ENCODE measurements at regions of chr3 and their contacts with region 1.

Region 1: DNA sequence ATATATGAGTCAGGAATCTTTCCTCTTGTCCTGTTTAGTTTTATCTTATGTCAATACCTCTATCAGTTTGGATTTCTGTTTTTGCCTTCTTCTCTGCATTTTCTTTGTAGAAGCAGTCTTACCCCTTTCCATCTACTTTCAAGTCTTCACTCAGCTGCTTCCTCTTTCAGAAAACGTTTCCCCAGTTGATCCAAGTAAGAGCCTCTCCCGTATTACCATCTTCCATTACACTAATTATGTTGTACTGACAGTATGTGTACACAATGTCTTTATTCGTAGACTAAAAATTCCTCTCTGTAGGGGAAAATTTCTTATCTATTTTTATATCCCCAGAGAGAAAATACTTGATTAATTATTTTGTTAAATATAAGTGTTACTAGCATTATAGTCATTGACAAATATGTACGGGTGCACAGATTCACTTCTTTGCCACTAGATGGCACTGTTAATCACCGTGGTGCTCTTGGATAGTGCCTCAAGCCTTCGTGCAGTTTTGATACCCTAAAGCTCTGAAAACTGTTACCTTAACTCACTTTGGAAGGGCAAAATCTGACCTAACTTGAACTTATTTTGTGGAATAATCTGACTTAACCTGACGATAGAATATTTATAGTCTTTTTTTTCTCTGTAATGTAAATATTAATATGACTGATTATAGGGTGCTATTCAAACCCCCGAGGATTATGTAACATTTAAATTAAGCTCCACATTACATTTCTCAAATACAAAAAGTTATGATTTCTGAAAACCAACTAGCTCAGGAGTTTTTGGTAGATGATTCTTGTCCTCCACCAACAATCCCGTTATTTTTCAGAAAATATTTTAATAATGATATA is 74.2 kb upstream of the POU1F1 start:
- DNase-seq: peak; percentile 20
- ATAC-seq: peak; percentile 85
- H3K4me3 Mint-ChIP-seq: no peak overlapping the region
- H3K27ac Mint-ChIP-seq: no peak overlapping the region
- H3K4me1 Mint-ChIP-seq: no peaks in the 10 kb centered on the region
- H3K27me3 Mint-ChIP-seq: peaks cover 5% of the 10 kb centered on the region

Region 2: DNA sequence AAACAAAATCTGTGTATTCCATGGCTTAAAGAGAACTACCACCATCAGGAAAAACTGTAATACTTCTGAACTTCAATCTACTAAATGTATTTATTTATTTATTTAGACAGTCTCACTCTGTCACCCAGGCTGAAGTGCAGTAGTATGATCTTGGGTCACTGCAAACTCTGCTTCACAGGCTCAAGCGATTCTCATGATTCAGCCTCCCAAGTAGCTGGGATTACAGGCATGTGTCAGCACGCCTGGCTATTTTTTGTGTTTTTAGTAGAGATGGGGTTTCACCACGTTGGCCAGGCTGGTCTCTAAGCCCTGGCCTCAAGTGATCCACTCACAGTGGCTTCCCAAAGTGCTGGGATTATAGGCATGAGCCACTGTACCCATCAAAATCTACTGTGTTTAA is 128.1 kb after region 1 on chr3:
- CTCF ChIA-PET with region 1: no interaction called
- POLR2A ChIA-PET with region 1: no interaction called
- intact Hi-C with region 1: no loop called
- DNase-seq: no peak
- ATAC-seq: no peak
- H3K4me3 Mint-ChIP-seq: no peak overlapping the region
- H3K27ac Mint-ChIP-seq: no peak overlapping the region
- H3K4me1 Mint-ChIP-seq: no peaks in the 10 kb centered on the region
- H3K27me3 Mint-ChIP-seq: no peaks in the 10 kb centered on the region

Region 3: DNA sequence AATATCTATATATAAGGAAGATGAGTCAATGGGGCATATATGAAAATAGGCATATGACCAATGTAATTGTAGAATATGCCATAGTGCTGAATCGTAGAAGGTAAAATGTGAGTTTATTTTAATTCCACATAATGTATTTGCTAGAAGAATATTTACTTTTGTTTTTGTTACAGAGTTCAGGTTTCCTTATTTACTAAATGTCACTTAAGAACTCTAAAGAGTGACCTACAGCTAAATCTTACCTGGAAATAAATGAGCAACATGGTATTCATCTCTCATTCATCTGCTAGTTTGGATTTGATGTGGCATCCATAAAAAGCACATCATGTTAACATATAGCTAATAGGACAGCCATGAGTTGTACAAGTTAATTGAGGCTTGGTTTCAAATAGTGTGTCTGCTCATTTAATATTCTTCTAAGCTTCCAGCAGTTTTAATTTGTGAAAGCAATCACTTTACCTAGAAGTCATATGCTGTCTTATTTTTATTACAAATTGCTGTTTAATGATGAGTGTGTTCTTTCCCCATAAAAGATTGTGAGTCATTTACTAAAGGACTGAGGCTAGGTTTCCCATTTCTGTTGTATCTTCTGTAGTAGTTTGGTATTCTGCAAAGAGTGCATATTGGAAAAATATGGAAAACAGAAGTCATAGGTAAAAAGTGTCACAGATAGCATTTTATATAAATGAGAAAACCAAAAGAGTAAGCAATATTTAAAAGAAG is 147.9 kb after region 1 on chr3:
- CTCF ChIA-PET with region 1: interaction called, 14 read pairs
- POLR2A ChIA-PET with region 1: no interaction called
- intact Hi-C with region 1: no loop called
- DNase-seq: no peak
- ATAC-seq: no peak
- H3K4me3 Mint-ChIP-seq: no peak overlapping the region
- H3K27ac Mint-ChIP-seq: no peak overlapping the region
- H3K4me1 Mint-ChIP-seq: no peaks in the 10 kb centered on the region
- H3K27me3 Mint-ChIP-seq: no peaks in the 10 kb centered on the region

Region 4: DNA sequence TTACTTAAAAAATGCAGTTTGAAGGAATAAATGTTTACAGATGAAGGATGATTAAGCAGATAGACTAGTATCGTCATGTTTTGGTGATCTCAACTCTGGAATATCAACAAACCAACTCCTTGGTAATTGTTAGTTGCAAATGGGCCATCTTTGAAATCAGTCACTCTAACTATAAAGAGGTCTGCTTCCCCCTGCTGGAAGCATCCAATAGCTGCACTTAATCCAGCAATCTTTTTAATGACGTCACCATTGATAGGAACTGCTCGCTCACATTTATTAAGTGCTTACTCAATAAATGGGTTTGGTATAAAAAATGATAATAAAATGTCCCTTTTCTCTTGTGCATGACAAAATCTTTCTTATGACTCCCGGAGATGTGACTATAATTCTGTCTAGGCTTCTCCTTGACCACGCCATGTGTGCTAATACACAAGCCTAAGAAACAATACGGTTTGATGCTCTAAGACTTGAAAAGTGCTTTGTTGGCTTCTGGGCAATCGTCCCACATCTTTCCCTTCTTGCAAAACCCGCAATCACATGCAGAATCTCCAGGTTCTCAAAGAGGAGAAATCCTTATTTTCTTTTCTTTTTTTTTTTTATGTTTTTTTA is 153.4 kb after region 1 on chr3:
- CTCF ChIA-PET with region 1: interaction called, 14 read pairs
- POLR2A ChIA-PET with region 1: no interaction called
- intact Hi-C with region 1: loop called (anchors 1 to 2 kb)
- DNase-seq: peak; percentile 16
- ATAC-seq: no peak
- H3K4me3 Mint-ChIP-seq: no peak overlapping the region
- H3K27ac Mint-ChIP-seq: no peak overlapping the region
- H3K4me1 Mint-ChIP-seq: no peaks in the 10 kb centered on the region
- H3K27me3 Mint-ChIP-seq: no peaks in the 10 kb centered on the region

Region 5: DNA sequence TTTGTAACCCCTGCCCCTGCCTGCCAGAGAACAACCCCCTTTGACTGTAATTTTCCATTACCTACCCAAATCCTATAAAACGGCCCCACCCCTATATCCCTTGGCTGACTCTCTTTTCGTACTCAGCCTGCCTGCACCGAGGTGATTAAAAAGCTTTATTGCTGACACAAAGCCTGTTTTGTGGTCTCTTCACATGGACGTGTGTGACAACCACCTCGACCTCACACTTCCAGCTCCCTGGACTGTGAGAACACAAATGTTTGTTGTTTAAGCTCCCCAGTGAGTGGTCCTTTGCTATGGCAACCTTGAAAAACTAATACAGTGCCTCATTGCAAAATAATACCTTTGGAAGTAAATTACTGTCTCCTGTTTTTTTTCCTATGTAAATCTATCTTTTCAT is 225.0 kb after region 1 on chr3:
- CTCF ChIA-PET with region 1: no interaction called
- POLR2A ChIA-PET with region 1: no interaction called
- intact Hi-C with region 1: no loop called
- DNase-seq: no peak
- ATAC-seq: no peak
- H3K4me3 Mint-ChIP-seq: no peak overlapping the region
- H3K27ac Mint-ChIP-seq: no peak overlapping the region
- H3K4me1 Mint-ChIP-seq: no peaks in the 10 kb centered on the region
- H3K27me3 Mint-ChIP-seq: no peaks in the 10 kb centered on the region

Region 6: DNA sequence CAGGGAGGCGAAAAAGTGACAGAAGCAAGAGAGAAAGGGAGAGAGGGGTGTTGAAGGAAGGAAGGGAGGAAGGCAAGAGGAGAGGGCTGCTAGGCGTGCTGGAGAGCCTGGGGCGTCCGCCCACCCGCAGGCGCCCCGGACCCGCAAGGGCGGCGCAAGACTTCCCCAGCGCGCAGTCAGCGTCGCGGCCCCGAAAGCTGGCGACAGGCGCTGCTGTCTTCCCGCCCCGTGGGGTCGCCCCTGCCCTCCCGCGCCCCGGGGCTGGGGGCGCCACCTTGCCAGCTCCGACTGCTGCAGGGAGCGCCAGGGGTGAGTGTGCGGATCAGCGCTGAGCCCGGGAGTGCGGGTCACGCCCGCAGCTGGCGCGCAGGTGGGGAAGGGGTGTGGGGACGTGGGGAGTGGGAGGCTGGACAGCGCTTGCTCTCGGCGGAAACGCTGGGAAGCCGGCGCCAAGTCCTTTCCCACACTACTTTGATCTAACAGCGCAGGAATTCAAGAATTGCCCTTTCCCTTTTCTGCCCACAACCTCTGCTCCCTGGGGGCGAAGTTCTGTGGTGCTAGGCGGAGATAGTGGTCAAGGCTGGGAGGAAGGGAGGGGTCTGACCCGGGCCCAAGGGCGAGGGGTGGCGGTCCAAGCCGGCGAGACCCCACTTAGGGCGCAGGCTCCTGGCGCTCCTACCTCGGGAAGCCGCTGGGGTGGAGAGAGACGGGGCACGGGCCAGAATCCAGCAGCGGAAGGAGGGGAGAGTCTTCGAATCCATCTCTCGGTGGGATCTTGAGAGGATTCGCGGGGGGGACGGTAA is 442.2 kb after region 1 on chr3:
- CTCF ChIA-PET with region 1: no interaction called
- POLR2A ChIA-PET with region 1: no interaction called
- intact Hi-C with region 1: loop called in 1 of 2 experiments (anchors 10 kb)
- DNase-seq: peak; percentile 28
- ATAC-seq: peak; percentile 55
- H3K4me3 Mint-ChIP-seq: peak within 1 kb of the TSS; percentile 51
- H3K27ac Mint-ChIP-seq: no peak within 1 kb of the TSS
- H3K4me1 Mint-ChIP-seq: peaks cover 29% of the 10 kb centered on the region
- H3K27me3 Mint-ChIP-seq: peaks cover 46% of the 10 kb centered on the region

Region 7: GRCh38 chr3:88003115-88003755 is 652.7 kb after region 1 on chr3:
- CTCF ChIA-PET with region 1: interaction called, 7 read pairs
- POLR2A ChIA-PET with region 1: no interaction called
- intact Hi-C with region 1: loop called (anchors 1 to 2 kb)
- DNase-seq: no peak
- ATAC-seq: no peak
- H3K4me3 Mint-ChIP-seq: no peak overlapping the region
- H3K27ac Mint-ChIP-seq: no peak overlapping the region
- H3K4me1 Mint-ChIP-seq: peaks cover 7% of the 10 kb centered on the region
- H3K27me3 Mint-ChIP-seq: no peaks in the 10 kb centered on the region

Region 8: DNA sequence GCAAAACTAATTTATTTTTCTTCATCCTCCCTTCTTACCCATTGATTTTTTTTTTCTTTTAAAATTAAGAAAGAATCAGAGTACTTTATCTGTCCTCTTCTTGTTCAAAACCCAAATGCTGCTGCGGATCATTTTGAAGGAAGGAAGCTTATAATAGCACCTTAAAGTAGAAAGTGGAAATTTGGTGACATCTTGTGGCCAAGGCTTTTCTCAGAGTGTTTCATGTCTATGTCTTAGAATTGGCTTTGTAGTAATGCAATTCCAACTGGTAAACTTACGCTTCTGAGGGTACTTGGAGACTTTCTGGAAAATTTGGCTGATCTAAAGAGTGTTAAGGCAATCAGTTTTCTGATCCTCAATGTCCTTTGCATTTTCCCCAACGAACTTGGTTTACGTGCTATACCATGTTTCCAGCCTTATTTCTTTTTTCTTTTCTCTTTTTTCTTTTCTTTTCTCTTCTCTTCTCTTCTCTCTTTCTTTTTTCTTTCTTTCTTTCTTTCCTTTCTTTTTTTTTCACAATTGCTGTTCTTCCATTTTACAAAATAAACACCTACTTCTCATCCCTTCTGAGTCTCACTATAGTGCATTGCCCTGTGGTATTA is 829.9 kb after region 1 on chr3:
- CTCF ChIA-PET with region 1: interaction called, 4 read pairs
- POLR2A ChIA-PET with region 1: no interaction called
- intact Hi-C with region 1: loop called (anchors 2 kb)
- DNase-seq: peak; percentile 30
- ATAC-seq: peak; percentile 66
- H3K4me3 Mint-ChIP-seq: no peak overlapping the region
- H3K27ac Mint-ChIP-seq: no peak overlapping the region
- H3K4me1 Mint-ChIP-seq: no peaks in the 10 kb centered on the region
- H3K27me3 Mint-ChIP-seq: no peaks in the 10 kb centered on the region